Lower leg skin (tissue), 4 donors: ENCODE measurements at regions of chr7 and their contacts with region 1.

Region 1: DNA sequence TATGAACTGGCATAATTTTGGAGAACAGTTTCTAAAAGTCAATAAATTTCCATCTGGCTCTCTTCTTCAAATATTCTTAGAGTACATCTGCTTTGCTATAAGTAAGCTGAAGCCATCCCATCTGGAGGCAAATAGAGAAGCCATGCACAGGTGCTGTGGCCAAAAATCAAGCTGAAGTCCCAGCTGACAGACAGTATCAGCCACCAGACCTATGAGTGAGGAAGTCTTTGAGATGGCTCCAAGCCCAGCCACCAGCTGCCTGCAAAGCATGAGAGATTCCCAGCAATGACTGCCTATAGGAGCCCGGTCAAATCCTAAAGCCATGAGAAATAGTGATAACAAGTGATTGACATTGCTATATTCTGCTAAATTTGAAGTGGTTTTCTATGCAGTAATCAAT is 21.7 kb upstream of the PRSS58 start:
- DNase-seq: no peak
- H3K4me3 ChIP-seq: no peak overlapping the region
- CTCF ChIP-seq: no peak
- POLR2A ChIP-seq: no peak

Region 2: DNA sequence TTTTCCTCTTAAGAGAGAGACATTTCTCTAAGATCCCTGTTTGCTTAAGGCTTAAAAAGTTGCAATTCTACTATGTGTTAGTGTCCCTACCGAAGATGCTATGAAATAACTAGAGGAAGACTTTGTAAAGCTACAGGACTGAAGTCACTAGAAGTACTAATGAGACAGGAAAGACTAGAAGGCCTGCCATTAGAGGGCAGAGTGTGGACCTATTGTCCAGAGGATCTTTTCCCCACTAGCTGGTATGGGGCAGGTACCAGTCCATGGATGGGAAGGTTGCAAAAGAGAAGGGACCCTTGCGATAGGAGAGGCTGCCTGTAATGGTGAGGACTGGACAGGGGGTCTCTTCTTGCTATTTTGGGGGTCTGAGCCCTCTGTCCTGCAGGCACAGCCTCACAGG is 1027.6 kb before region 1 on chr7:
- intact Hi-C with region 1: loop called (anchors 10 kb)
- DNase-seq: no peak
- H3K4me3 ChIP-seq: no peak overlapping the region
- CTCF ChIP-seq: no peak
- POLR2A ChIP-seq: no peak

Region 3: DNA sequence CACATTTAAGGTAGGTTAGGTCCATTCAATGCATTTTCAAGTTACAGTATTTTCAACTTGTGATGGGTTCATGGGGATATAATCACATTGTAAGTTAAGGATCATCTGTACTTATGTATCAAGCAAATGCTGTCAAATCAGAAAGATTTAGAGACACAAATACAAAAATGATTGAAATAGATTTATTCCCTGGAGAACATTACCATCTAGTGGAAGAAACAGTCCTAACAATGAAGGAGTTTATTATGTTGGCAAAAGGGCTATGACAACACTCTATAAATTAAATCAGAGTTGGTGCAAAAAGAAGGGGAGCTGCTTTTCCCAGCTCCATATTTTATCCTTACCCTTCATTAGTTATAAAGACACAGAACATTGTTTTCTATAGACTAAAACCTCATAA is 90.8 kb before region 1 on chr7:
- intact Hi-C with region 1: no loop called
- DNase-seq: no peak
- H3K4me3 ChIP-seq: no peak overlapping the region
- CTCF ChIP-seq: no peak
- POLR2A ChIP-seq: no peak